Breast epithelium (tissue), 4 donors: ENCODE measurements at regions of chrX and their contacts with region 1.

Region 1: GRCh38 chrX:27380163-27380845 is 82.8 kb downstream of the PPP4R3C start:
- DNase-seq: no peak
- H3K4me3 ChIP-seq: no peak overlapping the region
- H3K27ac ChIP-seq: no peak overlapping the region
- H3K4me1 ChIP-seq: no peaks in the 10 kb centered on the region
- H3K27me3 ChIP-seq: peaks cover 0 to 13% of the 10 kb centered on the region in 2 donors
- CTCF ChIP-seq: no peak
- POLR2A ChIP-seq: no peak

Region 2: DNA sequence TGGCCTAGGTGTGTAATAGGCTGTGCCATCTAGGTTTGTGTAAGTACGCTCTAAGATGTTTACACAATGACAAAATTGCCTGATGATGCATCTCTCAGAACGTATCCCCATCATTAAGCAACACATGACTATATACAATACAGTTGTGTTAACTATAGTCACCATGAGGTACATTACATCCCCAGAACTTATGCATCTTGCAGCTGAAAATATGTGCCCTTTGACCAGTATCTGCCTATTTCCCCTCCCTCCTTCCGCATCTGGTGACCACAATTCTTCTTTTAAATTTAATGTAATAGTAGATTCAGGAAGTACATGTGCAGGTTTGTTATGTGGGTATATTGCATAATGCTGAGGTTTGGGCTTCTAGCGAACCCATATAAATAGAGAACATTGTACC is 967.2 kb after region 1 on chrX:
- intact Hi-C with region 1: loop called (anchors 5 kb)
- DNase-seq: no peak
- H3K4me3 ChIP-seq: no peak overlapping the region
- H3K27ac ChIP-seq: no peak overlapping the region
- H3K4me1 ChIP-seq: no peaks in the 10 kb centered on the region
- H3K27me3 ChIP-seq: peaks cover 0 to 15% of the 10 kb centered on the region in 2 donors
- CTCF ChIP-seq: no peak
- POLR2A ChIP-seq: no peak